A673 (cell line): ENCODE measurements at regions of chr1 and their contacts with region 1.

Region 1: DNA sequence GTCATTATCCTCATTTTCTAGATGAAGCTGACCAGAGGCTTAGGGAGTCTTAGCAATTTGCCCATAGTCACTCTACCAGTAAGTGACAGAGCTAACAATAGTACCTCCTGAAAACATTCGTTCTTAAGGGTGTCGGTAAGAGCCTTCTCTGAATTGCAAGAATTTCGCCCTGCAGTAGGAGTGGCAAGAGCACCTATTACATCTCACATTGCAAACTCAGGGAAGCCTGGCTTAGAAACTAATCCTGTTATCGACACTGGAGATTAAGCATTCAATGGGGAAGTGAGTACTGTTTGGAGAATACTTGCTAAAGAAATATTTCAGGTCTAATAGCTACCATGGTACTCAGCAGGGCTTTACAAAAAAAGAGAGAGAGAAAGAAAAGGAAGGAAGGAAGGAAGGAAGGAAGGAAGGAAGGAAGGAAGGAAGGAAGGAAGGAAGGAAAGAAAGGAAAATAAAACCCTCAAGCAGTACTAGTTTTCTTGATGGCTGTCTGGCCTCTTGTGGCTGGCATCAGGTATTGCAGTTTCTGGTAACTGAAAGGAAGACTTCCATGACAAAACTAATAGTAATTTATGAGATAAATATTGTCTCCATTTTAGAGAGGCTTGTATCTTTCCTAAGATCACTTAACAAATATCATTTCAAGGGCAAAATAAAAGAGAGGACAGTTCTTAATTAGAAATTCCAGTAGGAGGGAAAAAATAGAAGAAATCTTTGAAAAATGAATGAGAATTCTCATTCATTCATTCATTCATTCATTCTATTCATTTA is 10.4 kb downstream of the C1orf226 start:
- DNase-seq: peak; percentile 99
- H3K4me3 ChIP-seq: peak overlapping the region; percentile 4
- H3K27ac ChIP-seq: peak overlapping the region; percentile 99
- H3K4me1 ChIP-seq: peaks cover 63% of the 10 kb centered on the region
- H3K27me3 ChIP-seq: no peaks in the 10 kb centered on the region
- CTCF ChIP-seq: peak; percentile 86

Region 2: GRCh38 chr1:161781995-161782394 is 610.0 kb before region 1 on chr1:
- CTCF ChIA-PET with region 1: no interaction called
- POLR2A ChIA-PET with region 1: no interaction called
- intact Hi-C with region 1: loop called (anchors 10 kb)
- DNase-seq: no peak
- H3K4me3 ChIP-seq: no peak overlapping the region
- H3K27ac ChIP-seq: no peak overlapping the region
- H3K4me1 ChIP-seq: no peaks in the 10 kb centered on the region
- H3K27me3 ChIP-seq: no peaks in the 10 kb centered on the region
- CTCF ChIP-seq: no peak

Region 3: DNA sequence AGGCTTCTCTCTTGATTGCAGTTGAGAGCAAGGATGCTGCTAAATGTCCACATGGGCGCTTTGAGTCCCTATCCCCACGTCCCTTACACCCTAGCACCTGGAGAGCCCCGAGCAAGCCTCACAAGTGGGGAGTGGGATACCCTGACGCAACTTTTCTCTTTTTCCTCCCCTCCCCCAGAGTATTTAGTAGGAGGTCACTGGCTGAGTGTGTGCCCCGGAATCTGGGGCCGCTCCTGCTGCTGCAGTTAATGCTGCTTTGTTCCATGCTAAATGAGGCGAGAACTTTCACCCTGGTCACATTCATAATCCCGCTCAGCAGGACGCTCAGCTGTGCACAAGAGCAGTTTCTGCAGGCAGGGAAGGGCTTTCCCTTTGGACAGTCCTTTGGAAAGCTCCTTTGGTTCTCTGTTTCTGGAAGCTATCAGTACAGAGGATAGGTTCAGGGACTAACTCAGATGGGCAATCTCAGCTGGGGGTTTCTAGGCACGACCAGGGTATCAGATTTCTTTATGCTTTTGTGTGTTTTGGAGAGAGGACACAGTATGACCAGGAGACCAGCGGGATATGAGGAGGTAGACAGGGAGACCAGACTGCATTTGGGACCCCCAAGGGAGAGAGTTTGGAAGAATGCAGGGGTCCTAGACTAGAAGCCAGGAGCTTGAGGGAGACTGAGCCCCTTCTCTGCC is 246.6 kb before region 1 on chr1:
- CTCF ChIA-PET with region 1: no interaction called
- POLR2A ChIA-PET with region 1: no interaction called
- intact Hi-C with region 1: loop called (anchors 5 kb)
- DNase-seq: peak; percentile 86
- H3K4me3 ChIP-seq: peak overlapping the region; percentile 17
- H3K27ac ChIP-seq: peak overlapping the region; percentile 95
- H3K4me1 ChIP-seq: peaks cover 68% of the 10 kb centered on the region
- H3K27me3 ChIP-seq: no peaks in the 10 kb centered on the region
- CTCF ChIP-seq: no peak

Region 4: GRCh38 chr1:162230096-162230495 is 161.9 kb before region 1 on chr1:
- CTCF ChIA-PET with region 1: interaction called, 9 read pairs
- POLR2A ChIA-PET with region 1: no interaction called
- intact Hi-C with region 1: loop called (anchors 1 kb)
- DNase-seq: peak; percentile 98
- H3K4me3 ChIP-seq: peak overlapping the region; percentile 4
- H3K27ac ChIP-seq: peak overlapping the region; percentile 92
- H3K4me1 ChIP-seq: peaks cover 74% of the 10 kb centered on the region
- H3K27me3 ChIP-seq: no peaks in the 10 kb centered on the region
- CTCF ChIP-seq: peak; percentile 70

Region 5: DNA sequence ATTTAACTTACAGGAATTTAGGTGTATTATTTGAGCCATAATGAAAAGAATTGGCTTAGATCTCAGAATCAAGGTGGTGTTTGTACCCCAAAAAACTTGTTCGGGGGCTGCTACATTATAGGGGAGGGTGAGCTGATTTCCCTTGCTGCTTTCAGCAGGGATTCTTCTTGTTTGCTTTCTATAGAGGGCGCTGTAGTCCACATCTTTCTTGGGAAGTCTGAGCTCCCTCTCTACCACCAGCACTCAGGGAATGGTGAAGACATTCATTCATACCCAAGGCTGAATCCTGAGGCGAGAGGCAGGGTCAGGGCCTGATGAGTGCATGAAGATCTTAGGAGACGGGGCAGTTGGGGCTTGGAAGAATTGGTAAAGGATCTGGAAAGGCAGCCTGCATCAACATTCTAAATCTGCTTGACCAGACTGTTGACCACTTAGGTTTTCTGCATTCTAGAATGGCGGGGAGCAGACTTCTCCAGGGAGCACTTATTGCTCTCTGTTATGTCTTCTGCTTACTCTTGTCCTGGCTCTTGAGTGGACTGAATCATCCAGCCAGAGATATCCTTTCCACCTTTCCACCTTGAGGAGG is 34.2 kb before region 1 on chr1:
- CTCF ChIA-PET with region 1: interaction called, 12 read pairs
- POLR2A ChIA-PET with region 1: no interaction called
- intact Hi-C with region 1: no loop called
- DNase-seq: peak; percentile 86
- H3K4me3 ChIP-seq: no peak overlapping the region
- H3K27ac ChIP-seq: peak overlapping the region; percentile 56
- H3K4me1 ChIP-seq: peaks cover 31% of the 10 kb centered on the region
- H3K27me3 ChIP-seq: no peaks in the 10 kb centered on the region
- CTCF ChIP-seq: peak; percentile 91

Region 6: DNA sequence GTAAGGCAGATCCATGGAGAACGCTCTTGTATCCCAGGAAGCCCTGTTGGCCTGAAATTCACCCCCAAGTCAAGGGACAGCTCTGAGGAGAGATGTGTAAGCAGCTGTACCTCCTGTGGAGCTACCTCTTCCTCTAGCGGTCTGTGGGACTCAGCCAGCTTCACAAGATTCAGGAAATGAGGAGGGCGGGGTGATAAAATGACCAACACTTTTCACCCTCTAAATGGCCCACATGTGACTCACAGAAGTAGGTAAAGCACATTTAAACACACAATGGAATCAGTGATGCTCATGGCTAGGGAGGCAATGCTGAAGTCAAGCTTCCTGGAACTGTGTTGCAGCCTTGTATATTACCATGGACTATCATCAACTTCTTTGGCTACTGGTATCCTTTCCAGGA is 20.0 kb after region 1 on chr1 and contains the start of gene SH2D1B:
- CTCF ChIA-PET with region 1: no interaction called
- POLR2A ChIA-PET with region 1: no interaction called
- intact Hi-C with region 1: no loop called
- DNase-seq: no peak
- H3K4me3 ChIP-seq: no peak within 1 kb of the TSS
- H3K27ac ChIP-seq: no peak within 1 kb of the TSS
- H3K4me1 ChIP-seq: no peaks in the 10 kb centered on the region
- H3K27me3 ChIP-seq: no peaks in the 10 kb centered on the region
- CTCF ChIP-seq: no peak
- total RNA-seq, gene SH2D1B: 0.11 and 0.34 TPM in 2 replicates

Region 7: DNA sequence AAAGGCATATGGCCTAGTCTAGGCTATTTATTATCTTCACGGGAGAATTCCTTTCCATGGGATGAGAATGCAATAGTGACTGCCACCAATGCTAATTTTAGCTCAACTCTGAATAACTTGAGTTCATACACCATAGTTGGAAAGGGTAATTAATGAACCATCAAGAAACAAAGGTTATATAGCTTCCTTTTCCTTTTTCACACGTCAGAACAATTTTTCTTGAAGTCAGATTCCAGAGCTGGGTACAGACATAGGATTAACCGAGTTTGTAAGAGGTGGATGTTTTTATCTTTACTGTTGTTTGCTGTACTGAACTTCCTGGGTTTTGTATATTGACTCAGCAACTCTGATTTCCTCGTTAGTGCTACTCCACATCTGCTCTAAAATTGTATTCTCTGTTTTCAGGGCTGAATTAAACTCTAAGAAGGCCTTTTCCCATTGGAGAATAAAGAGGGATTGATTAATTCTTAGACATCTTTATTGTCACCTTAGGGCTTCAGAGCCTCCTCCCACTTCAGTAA is 1191.7 kb after region 1 on chr1:
- CTCF ChIA-PET with region 1: no interaction called
- POLR2A ChIA-PET with region 1: no interaction called
- intact Hi-C with region 1: loop called (anchors 5 kb)
- DNase-seq: peak; percentile 59
- H3K4me3 ChIP-seq: no peak overlapping the region
- H3K27ac ChIP-seq: peak overlapping the region; percentile 98
- H3K4me1 ChIP-seq: peaks cover 54% of the 10 kb centered on the region
- H3K27me3 ChIP-seq: no peaks in the 10 kb centered on the region
- CTCF ChIP-seq: no peak